CD8-positive, alpha-beta T cell (primary cell): ENCODE measurements at regions of chr12 and their contacts with region 1.

Region 1: DNA sequence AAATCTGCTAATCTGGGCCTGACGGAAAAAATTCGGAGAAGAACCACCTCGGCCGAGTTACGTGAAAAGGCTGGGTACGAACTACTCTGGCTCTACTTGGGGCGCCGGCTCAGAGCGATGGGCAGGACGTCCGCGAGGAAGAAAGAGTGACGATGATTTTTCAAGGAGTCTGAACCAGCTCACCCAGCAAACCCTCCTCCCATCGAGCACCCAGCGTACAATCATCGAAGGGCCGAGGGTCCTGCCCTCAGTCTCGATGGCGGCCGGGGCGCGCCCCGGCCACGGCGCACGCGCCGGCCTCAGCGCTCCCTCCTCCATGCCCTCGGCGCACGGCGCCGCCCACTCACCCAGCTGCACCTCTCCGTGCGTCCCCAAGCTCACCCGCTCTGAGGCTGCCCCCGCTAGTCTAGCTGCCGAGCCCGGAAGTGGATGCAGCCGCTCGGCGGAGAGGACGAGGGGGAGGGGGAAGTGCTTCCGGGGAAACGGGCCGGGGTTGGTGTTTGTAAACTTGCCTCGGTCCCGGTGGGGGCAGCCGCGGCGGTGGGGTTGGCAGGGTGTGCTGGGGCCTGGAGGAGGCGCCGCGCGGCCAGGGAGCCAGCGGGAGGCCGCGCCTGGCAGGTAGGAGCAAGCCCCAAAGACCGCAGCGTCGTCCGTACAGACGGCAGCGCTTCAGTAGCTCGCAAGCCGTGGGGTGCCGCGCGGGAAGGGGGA is at the starts of genes CSAD and ZNF740:
- DNase-seq: peak; percentile 93 to 99 (median 98)
- ATAC-seq: peak; percentile 96
- H3K4me3 ChIP-seq: peak within 1 kb of the TSS; percentile 78 to 84
- H3K4me3 Mint-ChIP-seq: peak within 1 kb of the TSS; percentile 86
- H3K27ac ChIP-seq: peak within 1 kb of the TSS; percentile 75 to 88
- H3K27ac Mint-ChIP-seq: peak within 1 kb of the TSS; percentile 98
- H3K4me1 ChIP-seq: peaks cover 51% of the 10 kb centered on the region
- H3K4me1 Mint-ChIP-seq: peaks cover 52% of the 10 kb centered on the region
- H3K27me3 ChIP-seq: no peaks in the 10 kb centered on the region
- H3K27me3 Mint-ChIP-seq: no peaks in the 10 kb centered on the region
- CTCF ChIP-seq: no peak
- total RNA-seq, gene CSAD: 28.0 to 29.6 TPM
- total RNA-seq, gene ZNF740: 24.8 to 24.9 TPM

Region 2: DNA sequence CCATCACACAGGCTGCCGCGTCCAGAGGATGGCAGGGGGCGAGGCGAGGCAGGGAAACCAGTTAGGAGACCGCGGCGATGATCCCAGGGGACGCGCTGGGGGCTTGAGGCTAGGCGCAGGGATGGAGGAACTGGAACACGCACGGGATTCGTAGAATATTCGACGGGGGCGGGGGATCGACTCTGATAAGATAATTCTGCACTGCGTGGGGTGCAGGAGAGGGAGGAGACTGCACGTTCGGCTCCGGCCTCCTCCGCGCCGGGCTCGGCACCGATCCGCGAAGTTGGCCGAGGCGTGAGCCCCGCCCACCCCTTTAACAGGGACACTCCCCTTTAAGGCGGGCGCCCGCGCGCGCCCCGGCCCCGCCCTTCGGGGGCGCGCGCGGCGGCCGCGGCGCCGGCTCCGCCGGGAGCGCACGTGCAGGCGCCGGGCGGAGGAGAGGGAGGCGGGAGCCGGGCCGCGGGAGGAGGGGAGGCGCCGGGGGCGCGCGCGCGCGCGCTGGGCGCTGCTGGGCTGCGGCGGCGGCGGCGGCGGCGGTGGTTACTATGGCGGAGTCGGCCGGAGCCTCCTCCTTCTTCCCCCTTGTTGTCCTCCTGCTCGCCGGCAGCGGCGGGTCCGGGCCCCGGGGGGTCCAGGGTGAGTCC is 1229.1 kb before region 1 on chr12 and contains the start of gene ACVR1B:
- CTCF ChIA-PET with region 1: no interaction called
- POLR2A ChIA-PET with region 1: no interaction called
- intact Hi-C with region 1: loop called in 1 of 2 experiments (anchors 10 kb)
- DNase-seq: peak; percentile 84 to 95 (median 91)
- ATAC-seq: peak; percentile 95
- H3K4me3 ChIP-seq: peak within 1 kb of the TSS; percentile 76 to 93
- H3K4me3 Mint-ChIP-seq: peak within 1 kb of the TSS; percentile 98
- H3K27ac ChIP-seq: peak within 1 kb of the TSS; percentile 44 to 69
- H3K27ac Mint-ChIP-seq: peak within 1 kb of the TSS; percentile 91
- H3K4me1 ChIP-seq: peaks cover 38% of the 10 kb centered on the region
- H3K4me1 Mint-ChIP-seq: peaks cover 42% of the 10 kb centered on the region
- H3K27me3 ChIP-seq: no peaks in the 10 kb centered on the region
- H3K27me3 Mint-ChIP-seq: no peaks in the 10 kb centered on the region
- CTCF ChIP-seq: no peak
- total RNA-seq, gene ACVR1B: 12.0 to 13.7 TPM

Region 3: GRCh38 chr12:53097564-53098353 is 82.6 kb before region 1 on chr12 and contains the start of gene IGFBP6:
- CTCF ChIA-PET with region 1: no interaction called
- POLR2A ChIA-PET with region 1: no interaction called
- intact Hi-C with region 1: no loop called
- DNase-seq: peak in 8 of 9 experiments; percentile 32 to 80 (median 56)
- ATAC-seq: peak; percentile 45
- H3K4me3 ChIP-seq: peak within 1 kb of the TSS; percentile 51 to 70
- H3K4me3 Mint-ChIP-seq: peak within 1 kb of the TSS; percentile 79
- H3K27ac ChIP-seq: peak within 1 kb of the TSS in 1 of 2 experiments; percentile 23
- H3K27ac Mint-ChIP-seq: peak within 1 kb of the TSS; percentile 84
- H3K4me1 ChIP-seq: peaks cover 38% of the 10 kb centered on the region
- H3K4me1 Mint-ChIP-seq: peaks cover 36% of the 10 kb centered on the region
- H3K27me3 ChIP-seq: no peaks in the 10 kb centered on the region
- H3K27me3 Mint-ChIP-seq: peaks cover 2% of the 10 kb centered on the region
- CTCF ChIP-seq: no peak
- total RNA-seq, gene IGFBP6: 0.58 to 1.2 TPM

Region 4: GRCh38 chr12:53159195-53159839 is 21.1 kb before region 1 on chr12:
- CTCF ChIA-PET with region 1: interaction called, 34 read pairs
- POLR2A ChIA-PET with region 1: interaction called, 5 read pairs
- intact Hi-C with region 1: no loop called
- DNase-seq: peak; percentile 81 to 94 (median 89)
- ATAC-seq: peak; percentile 100
- H3K4me3 ChIP-seq: no peak overlapping the region
- H3K4me3 Mint-ChIP-seq: no peak overlapping the region
- H3K27ac ChIP-seq: no peak overlapping the region
- H3K27ac Mint-ChIP-seq: peak overlapping the region; percentile 1
- H3K4me1 ChIP-seq: peaks cover 8% of the 10 kb centered on the region
- H3K4me1 Mint-ChIP-seq: peaks cover 6% of the 10 kb centered on the region
- H3K27me3 ChIP-seq: no peaks in the 10 kb centered on the region
- H3K27me3 Mint-ChIP-seq: no peaks in the 10 kb centered on the region
- CTCF ChIP-seq: peak; percentile 97

Region 5: DNA sequence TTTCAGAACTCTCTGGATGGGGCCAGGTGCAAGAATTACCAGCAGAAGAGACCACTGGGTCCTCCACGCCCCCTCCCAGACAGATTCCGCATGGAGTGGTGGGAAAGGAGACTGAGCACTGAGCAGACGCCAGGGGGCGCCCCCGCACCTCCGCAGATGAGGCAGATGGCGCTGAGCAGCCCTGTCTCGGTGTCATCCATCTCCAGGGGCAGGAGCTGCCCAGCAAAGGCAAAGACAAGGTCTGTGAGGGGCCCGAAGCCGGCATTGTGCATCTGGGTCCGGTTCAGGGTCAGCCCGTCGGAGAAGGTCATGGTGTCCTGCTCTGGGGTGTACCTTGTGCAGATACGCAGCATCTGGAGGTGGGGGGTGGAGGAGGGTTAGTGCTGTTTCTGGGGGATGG is 33.0 kb after region 1 on chr12:
- CTCF ChIA-PET with region 1: interaction called, 22 read pairs
- POLR2A ChIA-PET with region 1: interaction called, 6 read pairs
- intact Hi-C with region 1: no loop called
- DNase-seq: peak; percentile 59 to 92 (median 85)
- ATAC-seq: peak; percentile 74
- H3K4me3 ChIP-seq: no peak overlapping the region
- H3K4me3 Mint-ChIP-seq: no peak overlapping the region
- H3K27ac ChIP-seq: no peak overlapping the region
- H3K27ac Mint-ChIP-seq: peak overlapping the region; percentile 80
- H3K4me1 ChIP-seq: peaks cover 55% of the 10 kb centered on the region
- H3K4me1 Mint-ChIP-seq: peaks cover 62% of the 10 kb centered on the region
- H3K27me3 ChIP-seq: no peaks in the 10 kb centered on the region
- H3K27me3 Mint-ChIP-seq: no peaks in the 10 kb centered on the region
- CTCF ChIP-seq: peak; percentile 85

Region 6: DNA sequence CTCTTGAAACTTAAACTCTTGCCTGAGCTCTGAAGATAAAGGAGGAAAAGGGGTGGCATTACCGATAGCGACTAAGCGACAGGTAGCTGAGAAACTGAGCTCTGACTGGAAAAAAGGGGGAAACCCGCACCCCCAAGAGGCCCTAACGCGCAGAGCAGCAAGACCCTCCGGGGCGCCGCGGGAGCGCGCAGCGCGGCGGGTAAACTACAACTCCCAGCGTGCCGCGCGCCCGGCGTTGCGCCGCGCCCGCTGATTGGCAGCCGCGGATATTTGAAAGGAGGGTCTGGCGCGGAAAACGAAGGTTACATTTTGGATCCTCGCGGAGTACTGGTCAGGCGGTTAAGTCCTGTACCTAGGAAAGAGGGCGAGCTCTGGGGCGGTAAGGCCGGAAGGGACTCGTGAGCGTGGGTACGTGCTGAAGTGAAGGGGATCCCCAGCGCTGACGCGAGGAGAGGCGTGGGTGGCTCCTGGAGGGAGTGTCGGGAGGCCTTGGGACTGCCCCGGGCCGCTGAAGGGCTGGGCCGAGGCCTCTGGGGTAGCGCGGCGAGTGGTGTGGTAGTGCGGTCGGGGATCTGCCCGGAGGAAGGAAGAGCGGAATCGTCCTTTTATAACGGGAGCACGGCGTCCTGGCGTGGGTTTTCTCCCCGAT is 87.7 kb after region 1 on chr12 and contains the start of gene ESPL1:
- CTCF ChIA-PET with region 1: no interaction called
- POLR2A ChIA-PET with region 1: interaction called, 11 read pairs
- intact Hi-C with region 1: loop called (anchors 1 kb)
- DNase-seq: peak; percentile 67 to 94 (median 84)
- ATAC-seq: peak; percentile 95
- H3K4me3 ChIP-seq: peak within 1 kb of the TSS; percentile 66 to 69
- H3K4me3 Mint-ChIP-seq: peak within 1 kb of the TSS; percentile 97
- H3K27ac ChIP-seq: peak within 1 kb of the TSS; percentile 25 to 68
- H3K27ac Mint-ChIP-seq: peak within 1 kb of the TSS; percentile 94
- H3K4me1 ChIP-seq: peaks cover 5% of the 10 kb centered on the region
- H3K4me1 Mint-ChIP-seq: peaks cover 17% of the 10 kb centered on the region
- H3K27me3 ChIP-seq: no peaks in the 10 kb centered on the region
- H3K27me3 Mint-ChIP-seq: no peaks in the 10 kb centered on the region
- CTCF ChIP-seq: peak; percentile 45
- total RNA-seq, gene ESPL1: 0.56 to 1.7 TPM

Region 7: DNA sequence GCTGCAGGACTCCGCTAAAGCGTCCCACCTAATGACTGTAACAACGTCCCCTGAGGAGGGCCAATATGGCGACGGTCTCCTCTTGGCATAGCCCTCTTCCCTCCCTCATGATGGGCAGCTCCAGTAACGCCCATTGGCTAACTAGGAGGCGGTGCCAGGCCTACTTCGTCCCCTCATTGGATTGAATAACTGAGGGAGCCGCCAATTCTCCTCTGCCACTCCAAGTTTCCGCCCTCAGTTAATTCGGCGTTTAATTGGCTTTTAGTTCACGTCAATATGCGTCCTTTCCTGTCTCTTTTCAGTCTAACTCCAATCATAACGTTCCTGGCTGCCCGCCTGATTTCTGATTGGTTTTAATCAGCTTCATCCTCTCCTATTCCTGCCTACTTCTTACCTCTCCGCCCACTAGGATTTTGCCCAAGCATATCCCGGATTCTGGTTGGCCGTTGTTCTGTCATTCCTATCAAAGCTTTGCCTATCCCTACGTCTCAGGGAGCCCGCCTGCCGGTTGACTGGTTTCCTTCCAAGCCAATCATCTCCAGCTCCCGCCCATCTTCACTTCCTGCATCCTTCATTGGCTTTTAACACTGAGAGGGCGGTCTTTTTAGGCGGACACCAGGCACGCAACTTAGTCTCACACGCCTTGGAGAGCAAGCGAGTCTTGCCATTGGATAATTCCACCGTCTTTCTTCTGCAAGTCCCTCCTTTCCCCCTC is 199.2 kb after region 1 on chr12:
- CTCF ChIA-PET with region 1: no interaction called
- POLR2A ChIA-PET with region 1: interaction called, 4 read pairs
- intact Hi-C with region 1: loop called in 1 of 2 experiments (anchors 1 kb)
- DNase-seq: peak in 8 of 9 experiments; percentile 79 to 100 (median 92)
- ATAC-seq: peak; percentile 73
- H3K4me3 ChIP-seq: peak overlapping the region; percentile 64 to 65
- H3K4me3 Mint-ChIP-seq: no peak overlapping the region
- H3K27ac ChIP-seq: peak overlapping the region; percentile 61 to 83
- H3K27ac Mint-ChIP-seq: no peak overlapping the region
- H3K4me1 ChIP-seq: peaks cover 44% of the 10 kb centered on the region
- H3K4me1 Mint-ChIP-seq: peaks cover 35% of the 10 kb centered on the region
- H3K27me3 ChIP-seq: no peaks in the 10 kb centered on the region
- H3K27me3 Mint-ChIP-seq: no peaks in the 10 kb centered on the region
- CTCF ChIP-seq: no peak

Region 8: GRCh38 chr12:53675651-53676453 is 495.5 kb after region 1 on chr12 and contains the start of gene ATP5MC2:
- CTCF ChIA-PET with region 1: no interaction called
- POLR2A ChIA-PET with region 1: no interaction called
- intact Hi-C with region 1: loop called in 1 of 2 experiments (anchors 5 kb)
- DNase-seq: peak; percentile 96 to 99 (median 97)
- ATAC-seq: peak; percentile 90
- H3K4me3 ChIP-seq: peak within 1 kb of the TSS; percentile 67 to 92
- H3K4me3 Mint-ChIP-seq: peak within 1 kb of the TSS; percentile 92
- H3K27ac ChIP-seq: peak within 1 kb of the TSS; percentile 60 to 84
- H3K27ac Mint-ChIP-seq: peak within 1 kb of the TSS; percentile 95
- H3K4me1 ChIP-seq: peaks cover 14% of the 10 kb centered on the region
- H3K4me1 Mint-ChIP-seq: peaks cover 36% of the 10 kb centered on the region
- H3K27me3 ChIP-seq: peaks cover 0 to 16% of the 10 kb centered on the region in 2 experiments
- H3K27me3 Mint-ChIP-seq: peaks cover 16% of the 10 kb centered on the region
- CTCF ChIP-seq: peak; percentile 99
- total RNA-seq, gene ATP5MC2: 220 to 229 TPM